GM13976 (cell line): ENCODE measurements at regions of chr2 and their contacts with region 1.

Region 1: GRCh38 chr2:118855451-118856279 is 8.2 kb upstream of the EN1 start:
- DNase-seq: peak; percentile 93
- CTCF ChIP-seq: peak; percentile 94

Region 2: DNA sequence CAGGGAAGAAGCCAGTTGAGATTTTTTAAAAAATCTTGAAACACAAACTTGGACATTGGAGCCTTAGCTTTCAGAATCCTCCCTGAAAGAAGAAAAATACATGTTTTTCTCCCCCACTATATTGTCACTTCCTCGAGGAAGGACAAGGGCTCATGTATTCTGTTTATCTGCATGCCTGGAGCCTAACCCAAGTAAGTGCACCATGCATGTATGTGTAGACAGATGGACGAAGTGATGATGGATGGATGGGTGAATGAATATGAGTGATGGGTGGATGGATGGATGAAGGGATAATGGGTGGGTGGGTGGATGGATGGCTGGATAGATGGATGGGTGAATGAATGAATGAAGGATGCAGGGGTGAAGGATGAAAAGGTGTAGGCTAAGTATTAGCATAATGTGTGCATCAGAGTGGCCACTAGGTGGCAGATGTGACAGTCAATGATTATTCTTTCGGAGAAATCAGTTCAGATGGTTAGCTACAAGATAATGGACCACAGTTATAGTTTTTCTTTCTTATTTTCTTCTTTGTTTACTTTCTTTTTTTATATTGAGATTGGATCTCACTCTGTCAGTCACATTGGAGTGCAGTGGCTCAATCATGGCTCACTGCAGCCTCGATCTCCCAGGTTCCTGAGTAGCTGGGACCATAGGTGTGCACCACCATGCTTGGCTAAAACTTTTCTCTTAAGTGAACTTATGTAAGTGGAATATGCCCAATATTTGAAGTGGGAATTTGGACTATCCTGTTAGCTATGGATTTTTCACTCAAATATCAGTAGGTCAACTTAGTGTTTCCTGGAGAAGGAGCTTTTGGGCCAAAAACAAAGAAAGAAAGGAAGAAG is 823.3 kb before region 1 on chr2:
- in situ Hi-C with region 1: loop called (anchors 25 kb)
- DNase-seq: peak; percentile 46
- CTCF ChIP-seq: peak; percentile 74

Region 3: GRCh38 chr2:118221666-118222594 is 633.7 kb before region 1 on chr2:
- in situ Hi-C with region 1: loop called (anchors 10 kb)
- DNase-seq: peak; percentile 63
- CTCF ChIP-seq: peak; percentile 60

Region 4: GRCh38 chr2:118654945-118655344 is 200.7 kb before region 1 on chr2:
- in situ Hi-C with region 1: no loop called
- DNase-seq: no peak
- CTCF ChIP-seq: no peak